IMR-90 (cell line): ENCODE measurements at regions of chr14 and their contacts with region 1.

Region 1: DNA sequence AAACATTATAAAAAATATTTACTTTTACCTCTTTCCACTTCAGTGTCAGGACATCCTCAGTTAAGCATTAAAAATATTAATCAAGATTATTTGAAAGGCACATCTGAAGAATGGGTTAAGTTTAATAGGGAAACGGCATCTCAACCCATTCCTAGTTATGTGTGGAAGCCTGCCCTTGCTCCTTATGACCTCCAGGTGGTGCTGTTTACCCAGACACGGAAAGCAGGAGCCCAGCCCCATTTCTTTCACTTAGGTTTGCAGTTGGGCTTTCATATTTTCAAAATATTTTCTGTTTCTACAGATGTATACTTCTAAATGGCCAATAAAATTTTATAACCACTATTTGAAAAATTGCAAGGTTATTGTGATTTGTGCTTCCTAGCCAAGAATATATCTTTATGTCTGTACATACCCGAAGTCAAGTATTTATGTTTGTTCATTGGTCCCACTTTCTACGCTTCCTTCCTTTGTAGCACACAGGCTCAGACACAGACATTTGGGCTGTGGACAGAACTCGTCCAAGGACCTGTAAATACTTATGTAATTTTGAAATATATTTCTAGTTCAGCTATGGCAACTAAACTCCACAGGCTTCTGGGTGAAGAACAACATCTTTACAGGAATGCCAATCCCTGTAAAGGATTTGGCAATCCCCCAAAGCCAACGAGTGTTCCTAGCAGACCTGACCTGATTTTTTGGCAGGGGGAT is 247.1 kb downstream of the AKAP6 start:
- DNase-seq: peak; percentile 59
- ATAC-seq: peak; percentile 98
- H3K4me3 ChIP-seq: no peak overlapping the region
- H3K27ac ChIP-seq: no peak overlapping the region
- H3K4me1 ChIP-seq: no peaks in the 10 kb centered on the region
- H3K27me3 ChIP-seq: peaks cover 18% of the 10 kb centered on the region
- CTCF ChIP-seq: peak; percentile 97
- POLR2A ChIP-seq: no peak
- RAD21 ChIP-seq: peak; percentile 96

Region 2: DNA sequence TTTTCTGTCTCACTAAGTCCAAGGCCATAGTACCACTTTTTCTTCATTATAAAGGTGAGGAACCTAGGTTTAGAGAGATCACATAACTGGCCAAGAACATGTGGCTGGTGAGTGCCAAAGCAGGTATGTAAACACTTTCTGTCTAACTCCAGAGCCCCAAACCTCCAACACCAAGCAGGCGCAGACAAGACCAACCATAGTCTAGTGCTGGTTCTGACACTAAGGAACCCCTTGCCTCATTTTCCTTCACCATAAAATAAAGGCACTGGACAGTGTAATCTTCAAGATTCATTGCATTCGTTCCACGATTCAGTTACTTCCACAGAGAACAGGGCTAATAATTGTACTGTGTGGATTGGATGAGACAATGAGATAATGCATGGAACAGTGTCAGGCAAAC is 433.4 kb after region 1 on chr14:
- CTCF ChIA-PET with region 1: no interaction called
- POLR2A ChIA-PET with region 1: no interaction called
- dilution Hi-C with region 1: no loop called
- in situ Hi-C with region 1: loop called (anchors 10 kb)
- intact Hi-C with region 1: no loop called
- DNase-seq: no peak
- ATAC-seq: no peak
- H3K4me3 ChIP-seq: no peak overlapping the region
- H3K27ac ChIP-seq: no peak overlapping the region
- H3K4me1 ChIP-seq: no peaks in the 10 kb centered on the region
- H3K27me3 ChIP-seq: no peaks in the 10 kb centered on the region
- CTCF ChIP-seq: no peak
- POLR2A ChIP-seq: no peak
- RAD21 ChIP-seq: no peak

Region 3: GRCh38 chr14:33792720-33793368 is 1216.6 kb after region 1 on chr14:
- CTCF ChIA-PET with region 1: interaction called, 8 read pairs
- POLR2A ChIA-PET with region 1: no interaction called
- dilution Hi-C with region 1: loop called (anchors 25 kb)
- in situ Hi-C with region 1: loop called (anchors 5 kb)
- intact Hi-C with region 1: loop called (anchors 1 kb)
- DNase-seq: peak; percentile 66
- ATAC-seq: peak; percentile 87
- H3K4me3 ChIP-seq: no peak overlapping the region
- H3K27ac ChIP-seq: no peak overlapping the region
- H3K4me1 ChIP-seq: no peaks in the 10 kb centered on the region
- H3K27me3 ChIP-seq: no peaks in the 10 kb centered on the region; the same call in 1 of the 2 replicates
- CTCF ChIP-seq: peak; percentile 85
- POLR2A ChIP-seq: no peak
- RAD21 ChIP-seq: peak; percentile 80

Region 4: GRCh38 chr14:34227834-34228649 is 1651.8 kb after region 1 on chr14:
- CTCF ChIA-PET with region 1: no interaction called
- POLR2A ChIA-PET with region 1: no interaction called
- dilution Hi-C with region 1: no loop called
- in situ Hi-C with region 1: no loop called
- intact Hi-C with region 1: loop called (anchors 5 kb)
- DNase-seq: peak; percentile 44
- ATAC-seq: peak; percentile 100
- H3K4me3 ChIP-seq: no peak overlapping the region
- H3K27ac ChIP-seq: no peak overlapping the region
- H3K4me1 ChIP-seq: no peaks in the 10 kb centered on the region
- H3K27me3 ChIP-seq: no peaks in the 10 kb centered on the region
- CTCF ChIP-seq: peak; percentile 68
- POLR2A ChIP-seq: no peak
- RAD21 ChIP-seq: peak; percentile 69

Region 5: DNA sequence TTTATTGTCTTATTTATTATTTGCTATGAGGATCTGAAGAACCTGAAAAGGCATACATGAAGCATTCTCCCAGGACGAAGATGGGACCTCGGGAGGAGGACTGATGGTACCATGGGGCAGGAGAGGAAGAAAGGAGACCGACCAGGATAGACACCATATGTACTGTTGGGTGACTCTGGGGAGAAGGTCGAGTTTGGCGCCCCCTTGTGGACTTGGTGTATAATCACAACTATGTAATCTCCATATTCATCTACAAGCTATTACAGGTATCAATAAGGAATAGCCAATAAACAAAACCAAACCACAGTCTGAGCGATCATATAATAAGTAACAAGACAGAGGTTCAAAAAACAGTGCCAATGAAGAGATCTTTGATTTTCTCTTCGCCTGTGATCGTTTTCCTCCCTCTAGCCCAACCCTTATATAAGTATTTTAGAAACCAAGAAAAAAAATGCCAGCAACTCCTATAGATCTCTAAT is 1746.7 kb after region 1 on chr14:
- CTCF ChIA-PET with region 1: no interaction called
- POLR2A ChIA-PET with region 1: no interaction called
- dilution Hi-C with region 1: no loop called
- in situ Hi-C with region 1: no loop called
- intact Hi-C with region 1: loop called (anchors 2 kb)
- DNase-seq: peak; percentile 46
- ATAC-seq: peak; percentile 87
- H3K4me3 ChIP-seq: no peak overlapping the region
- H3K27ac ChIP-seq: no peak overlapping the region
- H3K4me1 ChIP-seq: no peaks in the 10 kb centered on the region
- H3K27me3 ChIP-seq: peaks cover 7% of the 10 kb centered on the region
- CTCF ChIP-seq: peak; percentile 60
- POLR2A ChIP-seq: no peak
- RAD21 ChIP-seq: no peak